GM12878 (cell line): ENCODE measurements at regions of chr13 and their contacts with region 1.

Region 1: GRCh38 chr13:41132512-41133152 is at the start of gene KBTBD6:
- DNase-seq: peak; percentile 92
- ATAC-seq: peak; percentile 96
- H3K4me3 ChIP-seq: peak within 1 kb of the TSS; percentile 74
- H3K27ac ChIP-seq: peak within 1 kb of the TSS; percentile 71
- H3K4me1 ChIP-seq: peaks cover 8% of the 10 kb centered on the region
- H3K27me3 ChIP-seq: no peaks in the 10 kb centered on the region
- CTCF ChIP-seq: no peak
- EP300 ChIP-seq: no peak
- POLR2A ChIP-seq: peak; percentile 78
- RAD21 ChIP-seq: no peak
- polyA plus RNA-seq, gene KBTBD6: 1.9 to 2.4 TPM

Region 2: DNA sequence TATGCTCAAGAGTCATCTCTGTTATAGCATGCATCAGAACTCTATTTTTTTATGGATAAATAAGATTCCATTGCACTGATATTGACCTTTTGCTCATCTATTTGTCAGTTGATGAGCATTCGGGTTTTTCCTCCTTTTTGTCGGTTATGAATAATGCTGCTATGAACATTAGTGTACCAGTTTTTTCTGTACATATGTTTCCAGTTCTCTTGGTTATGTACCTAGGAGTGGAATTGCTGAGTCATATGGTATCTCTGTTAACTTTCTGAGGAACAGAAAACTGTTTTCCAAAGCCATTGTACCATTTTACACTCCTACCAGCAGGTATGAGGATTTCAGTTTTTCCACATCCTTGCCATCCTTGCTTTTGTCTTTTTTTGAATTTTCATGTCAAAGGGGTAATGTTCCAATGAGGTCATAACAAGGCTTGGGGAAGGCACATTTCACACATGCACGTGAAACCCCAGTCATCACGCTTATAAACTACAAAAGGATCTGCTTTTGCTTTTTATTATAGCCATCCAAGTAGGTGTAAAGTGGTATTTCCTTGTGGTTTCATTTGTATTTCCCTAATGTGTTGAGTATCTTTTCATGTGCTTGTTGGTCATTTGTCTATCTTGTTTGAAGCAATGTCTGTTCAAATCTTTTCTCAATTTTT is 47.1 kb after region 1 on chr13:
- CTCF ChIA-PET with region 1: no interaction called
- POLR2A ChIA-PET with region 1: no interaction called
- RAD21 ChIA-PET with region 1: no interaction called
- SMC1A ChIA-PET with region 1: no interaction called
- in situ Hi-C with region 1: no loop called
- intact Hi-C with region 1: no loop called
- DNase-seq: no peak
- ATAC-seq: no peak
- H3K4me3 ChIP-seq: no peak overlapping the region
- H3K27ac ChIP-seq: no peak overlapping the region
- H3K4me1 ChIP-seq: no peaks in the 10 kb centered on the region
- H3K27me3 ChIP-seq: no peaks in the 10 kb centered on the region
- CTCF ChIP-seq: no peak
- EP300 ChIP-seq: no peak
- POLR2A ChIP-seq: no peak
- RAD21 ChIP-seq: no peak

Region 3: DNA sequence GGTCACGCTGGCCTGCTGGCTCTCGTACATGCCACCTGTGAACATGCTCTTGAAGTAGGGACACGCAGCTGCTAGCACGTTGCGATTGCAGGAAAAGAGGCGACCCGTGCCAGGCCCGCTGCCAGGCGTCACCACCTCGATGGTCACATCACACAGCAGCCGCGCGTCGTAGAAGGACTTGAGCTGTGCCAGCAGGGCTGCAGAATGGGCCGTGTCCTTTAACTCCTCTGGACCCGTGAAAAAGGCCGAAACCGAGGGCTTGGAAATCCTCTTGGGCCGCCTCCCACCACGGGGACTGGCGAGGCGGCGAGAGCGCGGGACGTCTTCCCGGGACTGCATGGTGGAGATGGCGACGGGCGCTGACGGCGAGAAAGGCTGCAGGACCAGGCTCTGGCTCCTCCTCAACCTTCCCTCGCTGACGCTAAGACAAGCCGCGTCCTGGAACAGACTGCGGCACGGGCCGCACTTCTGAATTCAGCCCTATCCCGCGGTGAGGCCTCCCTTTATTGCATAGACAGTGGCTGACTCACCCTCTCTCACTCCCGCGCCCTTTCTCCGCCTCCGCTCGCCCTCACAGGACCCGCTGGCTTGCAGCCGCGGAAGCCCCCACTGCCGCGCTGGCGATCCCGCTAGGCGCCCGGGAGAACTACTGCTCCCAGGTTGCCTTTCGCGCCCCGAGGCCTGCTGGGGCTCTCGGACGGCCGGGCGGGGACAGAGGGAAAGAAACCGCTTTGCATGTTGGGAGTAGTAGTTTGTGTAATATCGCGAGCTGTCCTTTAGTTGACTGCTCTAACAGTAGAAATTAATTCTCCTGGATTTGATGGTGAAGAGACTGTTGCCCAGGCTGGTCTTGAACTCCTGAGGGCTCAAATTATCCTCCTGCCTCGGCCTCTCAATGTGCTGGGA is 61.5 kb after region 1 on chr13 and contains the start of gene KBTBD7:
- CTCF ChIA-PET with region 1: interaction called, 4 read pairs
- POLR2A ChIA-PET with region 1: interaction called, 3 read pairs
- RAD21 ChIA-PET with region 1: interaction called, 3 read pairs
- SMC1A ChIA-PET with region 1: interaction called, 6 read pairs
- in situ Hi-C with region 1: loop called (anchors 5 kb)
- intact Hi-C with region 1: loop called (anchors 1 kb)
- DNase-seq: peak; percentile 67
- ATAC-seq: peak; percentile 99
- H3K4me3 ChIP-seq: peak within 1 kb of the TSS; percentile 86
- H3K27ac ChIP-seq: peak within 1 kb of the TSS; percentile 69
- H3K4me1 ChIP-seq: peaks cover 4% of the 10 kb centered on the region
- H3K27me3 ChIP-seq: no peaks in the 10 kb centered on the region
- CTCF ChIP-seq: no peak
- EP300 ChIP-seq: no peak
- POLR2A ChIP-seq: peak; percentile 76
- RAD21 ChIP-seq: no peak
- polyA plus RNA-seq, gene KBTBD7: 1.8 to 2.8 TPM

Region 4: GRCh38 chr13:41310963-41311606 is 178.5 kb after region 1 on chr13 and contains the start of gene NAA16:
- CTCF ChIA-PET with region 1: no interaction called
- POLR2A ChIA-PET with region 1: no interaction called
- RAD21 ChIA-PET with region 1: no interaction called
- SMC1A ChIA-PET with region 1: no interaction called
- in situ Hi-C with region 1: no loop called
- intact Hi-C with region 1: loop called (anchors 5 kb)
- DNase-seq: peak; percentile 76
- ATAC-seq: peak; percentile 84
- H3K4me3 ChIP-seq: peak within 1 kb of the TSS; percentile 99
- H3K27ac ChIP-seq: peak within 1 kb of the TSS; percentile 83
- H3K4me1 ChIP-seq: peaks cover 6% of the 10 kb centered on the region; the same call in 1 of the 2 replicates
- H3K27me3 ChIP-seq: no peaks in the 10 kb centered on the region
- CTCF ChIP-seq: no peak
- EP300 ChIP-seq: no peak
- POLR2A ChIP-seq: peak; percentile 85
- RAD21 ChIP-seq: no peak
- polyA plus RNA-seq, gene NAA16: 5.4 to 6.3 TPM